ENCODE measurements at regions of chr7 and their contacts with region 1.

Region 1: DNA sequence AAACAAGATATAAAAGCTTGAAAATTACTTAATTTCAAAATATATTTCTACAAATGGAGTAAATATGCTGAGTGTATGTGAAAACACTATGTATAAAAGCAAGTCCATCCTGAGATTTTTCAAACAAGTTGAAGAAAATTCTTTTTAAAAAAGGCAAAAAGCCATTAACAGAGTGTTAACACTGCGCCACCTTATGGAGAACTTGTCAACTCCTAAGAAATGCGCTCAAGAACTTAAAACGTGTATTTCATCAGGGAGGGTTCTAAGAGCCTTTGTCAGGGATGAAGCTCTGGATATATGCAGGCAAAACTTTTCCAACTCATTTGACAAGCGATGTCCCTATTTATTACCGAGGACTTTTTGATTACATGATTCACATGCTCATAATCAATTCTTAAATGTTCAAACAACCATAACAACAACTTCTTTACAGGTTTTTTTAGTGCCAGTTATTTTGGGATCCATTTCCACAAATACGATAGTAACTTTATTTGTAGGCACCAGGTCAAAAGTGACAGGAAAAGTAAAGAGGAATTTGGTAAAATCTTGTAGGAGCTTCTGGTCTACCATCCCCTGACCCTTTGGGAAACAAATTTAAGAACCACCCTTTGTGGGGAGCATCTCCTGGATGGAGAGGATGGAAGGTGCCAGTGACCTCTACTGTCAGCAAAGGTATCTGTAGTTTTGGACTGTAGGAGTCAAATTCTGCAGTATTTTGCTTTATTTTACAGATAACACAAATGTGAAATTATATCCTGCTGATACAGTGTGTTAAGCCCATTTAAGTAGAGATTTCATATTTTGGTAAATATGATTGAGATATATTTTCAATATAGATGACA is 23.2 kb downstream of the CALCR start:
- DNase-seq: peak in 1 of 2 experiments; percentile 36
- H3K4me3 ChIP-seq: no peak overlapping the region
- H3K4me3 Mint-ChIP-seq: no peak overlapping the region
- H3K27ac Mint-ChIP-seq: no peak overlapping the region
- H3K4me1 ChIP-seq: no peaks in the 10 kb centered on the region
- H3K4me1 Mint-ChIP-seq: no peaks in the 10 kb centered on the region
- H3K27me3 ChIP-seq: no peaks in the 10 kb centered on the region
- H3K27me3 Mint-ChIP-seq: peaks cover 8% of the 10 kb centered on the region
- CTCF ChIP-seq: peak; percentile 45 to 70

Region 2: GRCh38 chr7:93092757-93093370 is 458.4 kb before region 1 on chr7:
- CTCF ChIA-PET with region 1: no interaction called
- POLR2A ChIA-PET with region 1: no interaction called
- intact Hi-C with region 1: loop called (anchors 5 kb)
- DNase-seq: peak in 1 of 2 experiments; percentile 27
- H3K4me3 ChIP-seq: no peak overlapping the region
- H3K4me3 Mint-ChIP-seq: no peak overlapping the region
- H3K27ac Mint-ChIP-seq: no peak overlapping the region
- H3K4me1 ChIP-seq: peaks cover 6% of the 10 kb centered on the region; the same call in 1 of the 2 replicates
- H3K4me1 Mint-ChIP-seq: peaks cover 4% of the 10 kb centered on the region
- H3K27me3 ChIP-seq: no peaks in the 10 kb centered on the region
- H3K27me3 Mint-ChIP-seq: peaks cover 16% of the 10 kb centered on the region
- CTCF ChIP-seq: peak; percentile 27 to 38

Region 3: DNA sequence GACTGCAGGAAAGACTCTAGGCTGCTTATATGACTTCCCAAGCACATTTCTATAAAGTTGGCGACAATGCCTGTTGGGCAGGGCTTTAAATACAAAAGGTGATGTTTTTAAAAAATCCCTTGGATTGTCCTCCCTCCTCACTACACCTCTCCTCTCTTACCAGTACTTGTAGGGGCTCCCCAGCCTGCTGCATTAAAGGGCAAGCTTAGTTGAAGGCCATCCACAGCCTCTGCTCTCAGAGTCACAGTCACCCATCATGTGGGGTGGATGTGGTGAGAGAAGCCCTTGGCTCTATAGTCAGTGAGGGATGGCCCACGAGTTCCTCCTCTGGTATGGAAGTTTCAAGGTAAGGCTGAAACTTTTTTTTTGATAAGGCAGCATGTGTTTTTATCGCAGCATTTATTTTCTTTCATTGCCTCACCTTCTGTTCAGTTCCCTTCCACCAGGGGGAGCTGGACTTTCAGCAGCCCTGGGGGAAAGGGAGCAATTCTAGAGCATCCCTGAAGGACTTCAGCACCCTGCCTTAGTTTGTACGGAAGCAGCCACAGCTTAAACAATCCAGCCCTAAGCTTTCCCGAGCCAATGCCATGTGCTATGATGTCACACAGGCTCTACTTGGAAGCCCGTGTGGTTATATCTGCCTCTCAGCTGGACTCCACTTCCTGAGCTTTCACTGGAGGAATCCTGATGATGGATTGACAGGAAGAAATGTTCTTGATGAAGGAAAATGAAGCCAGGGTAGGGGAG is 108.6 kb before region 1 on chr7:
- CTCF ChIA-PET with region 1: interaction called, 6 read pairs
- POLR2A ChIA-PET with region 1: no interaction called
- intact Hi-C with region 1: loop called (anchors 1 kb)
- DNase-seq: peak; percentile 48 to 66
- H3K4me3 ChIP-seq: no peak overlapping the region
- H3K4me3 Mint-ChIP-seq: no peak overlapping the region
- H3K27ac Mint-ChIP-seq: no peak overlapping the region
- H3K4me1 ChIP-seq: no peaks in the 10 kb centered on the region
- H3K4me1 Mint-ChIP-seq: no peaks in the 10 kb centered on the region
- H3K27me3 ChIP-seq: no peaks in the 10 kb centered on the region; the same call in 1 of the 2 replicates
- H3K27me3 Mint-ChIP-seq: peaks cover 21% of the 10 kb centered on the region
- CTCF ChIP-seq: peak; percentile 74 to 87

Region 4: GRCh38 chr7:93461350-93461749 is 89.9 kb before region 1 on chr7:
- CTCF ChIA-PET with region 1: no interaction called
- POLR2A ChIA-PET with region 1: no interaction called
- intact Hi-C with region 1: loop called (anchors 2 kb)
- DNase-seq: no peak
- H3K4me3 ChIP-seq: no peak overlapping the region
- H3K4me3 Mint-ChIP-seq: no peak overlapping the region
- H3K27ac Mint-ChIP-seq: no peak overlapping the region
- H3K4me1 ChIP-seq: no peaks in the 10 kb centered on the region
- H3K4me1 Mint-ChIP-seq: no peaks in the 10 kb centered on the region
- H3K27me3 ChIP-seq: no peaks in the 10 kb centered on the region
- H3K27me3 Mint-ChIP-seq: peaks cover 8% of the 10 kb centered on the region
- CTCF ChIP-seq: peak in 1 of 2 experiments; percentile 24

Region 5: DNA sequence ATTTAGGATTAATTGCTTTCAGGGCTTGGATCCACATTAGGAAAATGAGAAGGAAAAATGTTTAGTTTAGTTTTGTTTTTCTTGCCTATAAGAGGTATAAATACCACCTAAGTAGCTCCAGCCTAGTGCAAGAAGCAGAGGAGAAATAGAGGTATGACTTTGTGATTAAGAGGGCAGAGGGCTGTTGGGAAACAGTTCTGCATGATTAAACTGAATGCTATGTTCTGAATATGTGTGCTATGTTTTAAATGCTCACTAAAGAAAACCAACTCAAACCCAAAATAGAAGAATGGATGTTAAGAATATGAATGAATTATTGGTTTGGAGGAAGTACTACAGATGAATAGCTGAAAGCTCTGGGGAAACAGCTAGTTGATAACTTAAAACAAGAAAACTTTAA is 15.6 kb after region 1 on chr7:
- CTCF ChIA-PET with region 1: no interaction called
- POLR2A ChIA-PET with region 1: no interaction called
- intact Hi-C with region 1: no loop called
- DNase-seq: no peak
- H3K4me3 ChIP-seq: no peak overlapping the region
- H3K4me3 Mint-ChIP-seq: no peak overlapping the region
- H3K27ac Mint-ChIP-seq: no peak overlapping the region
- H3K4me1 ChIP-seq: no peaks in the 10 kb centered on the region
- H3K4me1 Mint-ChIP-seq: no peaks in the 10 kb centered on the region
- H3K27me3 ChIP-seq: no peaks in the 10 kb centered on the region
- H3K27me3 Mint-ChIP-seq: peaks cover 18% of the 10 kb centered on the region
- CTCF ChIP-seq: no peak

Region 6: GRCh38 chr7:94028768-94029167 is 477.5 kb after region 1 on chr7:
- CTCF ChIA-PET with region 1: no interaction called
- POLR2A ChIA-PET with region 1: no interaction called
- intact Hi-C with region 1: no loop called
- DNase-seq: no peak
- H3K4me3 ChIP-seq: no peak overlapping the region
- H3K4me3 Mint-ChIP-seq: no peak overlapping the region
- H3K27ac Mint-ChIP-seq: no peak overlapping the region
- H3K4me1 ChIP-seq: no peaks in the 10 kb centered on the region
- H3K4me1 Mint-ChIP-seq: no peaks in the 10 kb centered on the region
- H3K27me3 ChIP-seq: no peaks in the 10 kb centered on the region; the same call in 1 of the 2 replicates
- H3K27me3 Mint-ChIP-seq: peaks cover 30% of the 10 kb centered on the region
- CTCF ChIP-seq: no peak